ENCODE measurements at regions of chr12 and their contacts with region 1.

Region 1: DNA sequence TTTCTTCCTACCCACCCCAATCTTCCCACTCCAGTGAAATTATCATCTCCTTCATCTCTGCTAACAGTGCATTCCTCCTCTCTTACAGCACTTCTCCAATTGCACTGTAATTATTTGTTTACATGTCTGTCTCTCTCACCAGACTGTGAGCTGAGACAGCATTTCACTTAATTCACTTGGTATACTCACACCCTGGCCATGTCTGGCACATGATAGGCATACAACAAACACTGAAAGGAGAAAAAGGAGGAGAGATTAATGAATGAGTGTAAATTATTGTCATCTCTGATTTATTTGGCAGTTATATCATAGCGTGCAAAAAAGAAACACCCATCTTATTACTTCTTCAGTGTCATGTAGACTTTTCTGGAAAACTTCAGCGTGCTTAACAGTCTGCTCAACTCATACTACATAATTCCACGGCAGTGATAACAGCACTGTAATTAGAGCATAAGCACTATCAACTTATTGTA is 452.3 kb downstream of the ADAMTS20 start:
- DNase-seq: no peak

Region 2: DNA sequence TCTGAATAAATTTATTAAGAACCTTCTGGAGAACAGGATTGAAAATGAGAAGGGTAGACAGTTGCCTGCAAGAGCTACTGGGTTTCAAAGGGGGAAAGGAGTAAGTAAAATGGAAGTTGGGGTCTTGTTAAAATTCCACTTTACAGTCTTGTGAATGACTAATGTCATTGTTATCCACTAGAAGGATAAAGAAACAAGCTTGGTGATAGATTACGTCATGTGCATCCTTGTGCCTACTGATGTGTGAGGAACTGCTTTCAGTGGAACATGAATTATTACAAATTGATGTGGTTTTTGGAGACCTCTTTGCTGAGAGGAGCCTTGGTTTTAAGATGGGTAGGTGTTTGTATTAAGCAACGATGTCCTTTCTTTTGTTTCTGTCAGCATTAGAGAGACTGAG is 237.7 kb before region 1 on chr12:
- intact Hi-C with region 1: no loop called
- DNase-seq: no peak

Region 3: DNA sequence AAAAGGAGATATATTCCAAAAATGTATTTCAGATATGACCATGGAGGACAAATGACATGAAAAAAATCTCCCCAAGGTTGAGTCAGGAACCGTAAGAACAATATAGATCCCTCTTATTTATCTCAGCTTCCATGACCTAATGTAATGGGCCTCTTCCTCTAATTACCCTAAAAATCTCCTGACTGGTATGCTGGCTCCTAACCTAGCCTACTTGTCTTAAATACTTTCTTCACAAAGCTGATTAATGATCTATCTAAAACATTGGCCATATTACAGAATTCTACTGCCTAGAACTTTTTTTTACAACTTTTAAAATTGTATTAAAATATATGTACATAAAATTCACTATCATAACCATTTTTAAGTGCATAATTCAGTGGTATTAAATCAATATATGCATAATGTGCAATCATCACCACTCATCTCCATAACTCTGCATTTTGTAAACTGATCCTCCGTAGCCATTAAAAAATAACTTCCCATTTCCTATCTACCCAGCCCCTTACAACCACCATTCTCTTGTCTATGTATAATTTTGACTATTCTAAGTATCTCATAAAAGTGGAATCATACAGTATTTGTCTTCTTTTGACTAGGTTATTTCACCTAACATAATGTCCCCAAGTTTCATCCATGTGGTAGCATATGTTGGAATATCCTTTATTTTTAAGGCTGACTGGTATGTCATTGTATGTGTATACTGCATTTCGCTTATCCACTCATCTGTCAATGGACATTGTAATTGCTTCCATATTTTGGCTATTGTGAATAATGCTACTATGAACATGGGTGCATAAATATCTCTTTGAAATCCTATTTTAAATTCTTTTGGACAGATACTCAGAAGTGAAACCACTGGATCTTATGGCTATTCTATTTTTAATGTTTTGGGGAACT is 12.3 kb before region 1 on chr12:
- intact Hi-C with region 1: loop called in 1 of 2 experiments (anchors 1 kb)
- DNase-seq: no peak

Measured in posterior vena cava (tissue), 2 donors.